ENCODE measurements at regions of chr10 and their contacts with region 1.

Region 1: GRCh38 chr10:114550756-114551635 is 107.1 kb downstream of the ABLIM1 start:
- DNase-seq: peak; percentile 82 to 83
- ATAC-seq: peak; percentile 79

Region 2: DNA sequence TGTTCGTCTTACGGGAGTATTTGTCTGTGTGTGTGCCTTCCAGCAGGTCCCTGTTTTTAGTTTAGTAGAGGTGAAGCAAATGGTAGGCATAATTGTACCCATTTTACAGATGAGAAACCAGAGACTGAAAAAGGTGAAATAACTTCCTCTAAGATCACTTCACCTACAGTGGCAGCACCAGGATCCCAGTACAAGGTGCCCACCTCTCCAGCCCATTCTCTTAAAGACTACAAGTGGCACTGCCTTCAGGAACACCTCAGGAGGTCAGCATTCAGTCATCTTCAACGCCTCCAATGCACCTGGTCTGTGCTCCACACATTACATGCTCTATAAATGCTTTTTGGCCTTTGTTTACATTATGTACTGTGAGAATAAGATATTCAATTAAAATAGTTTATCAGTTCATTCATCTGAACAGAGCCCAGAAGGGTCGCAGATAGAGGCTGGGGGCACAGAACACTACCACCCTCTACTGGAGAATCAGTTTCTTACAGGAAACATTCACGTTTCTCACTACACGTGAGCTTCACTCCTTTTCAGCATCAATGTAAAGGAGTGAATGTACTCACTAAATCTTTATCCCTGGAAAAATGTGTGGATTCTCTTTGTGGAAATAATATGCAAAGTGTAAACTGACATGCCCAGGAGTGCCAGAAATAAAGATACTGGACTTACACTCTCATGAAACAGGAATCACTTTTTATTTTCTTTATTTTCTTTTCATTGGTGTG is 152.5 kb after region 1 on chr10:
- intact Hi-C with region 1: loop called in 1 of 2 experiments (anchors 10 kb)
- DNase-seq: no peak
- ATAC-seq: peak; percentile 64

Region 3: GRCh38 chr10:114779803-114780609 is 229.0 kb after region 1 on chr10:
- intact Hi-C with region 1: loop called in 1 of 2 experiments (anchors 5 kb)
- DNase-seq: no peak
- ATAC-seq: peak; percentile 95